Panc1 (cell line): ENCODE measurements at regions of chr6 and their contacts with region 1.

Region 1: GRCh38 chr6:3382326-3383279 is 74.2 kb downstream of the SLC22A23 start:
- DNase-seq: no peak
- ATAC-seq: no peak; the same call in 1 of the 2 replicates
- H3K4me3 ChIP-seq: no peak overlapping the region
- H3K27ac ChIP-seq: no peak overlapping the region
- H3K4me1 ChIP-seq: no peaks in the 10 kb centered on the region
- H3K27me3 ChIP-seq: no peaks in the 10 kb centered on the region
- CTCF ChIP-seq: no peak

Region 2: GRCh38 chr6:3372007-3372846 is 10.4 kb before region 1 on chr6:
- CTCF ChIA-PET with region 1: interaction called, 11 read pairs
- POLR2A ChIA-PET with region 1: no interaction called
- in situ Hi-C with region 1: no loop called
- intact Hi-C with region 1: no loop called
- DNase-seq: no peak
- ATAC-seq: no peak; the same call in 1 of the 2 replicates
- H3K4me3 ChIP-seq: no peak overlapping the region
- H3K27ac ChIP-seq: no peak overlapping the region
- H3K4me1 ChIP-seq: no peaks in the 10 kb centered on the region
- H3K27me3 ChIP-seq: no peaks in the 10 kb centered on the region
- CTCF ChIP-seq: no peak